PC-9 (cell line): ENCODE measurements at regions of chr1 and their contacts with region 1.

Region 1: GRCh38 chr1:51840743-51841461 is 37.6 kb downstream of the NRDC start:
- DNase-seq: peak in 1 of 2 experiments; percentile 3
- H3K4me3 ChIP-seq: no peak overlapping the region
- H3K27ac ChIP-seq: no peak overlapping the region
- H3K4me1 ChIP-seq: peaks cover 12% of the 10 kb centered on the region; the same call in 1 of the 2 replicates
- H3K27me3 ChIP-seq: no peaks in the 10 kb centered on the region
- CTCF ChIP-seq: no peak

Region 2: GRCh38 chr1:51100264-51100880 is 740.5 kb before region 1 on chr1:
- CTCF ChIA-PET with region 1: no interaction called
- POLR2A ChIA-PET with region 1: interaction called, 11 read pairs
- intact Hi-C with region 1: no loop called
- DNase-seq: no peak
- H3K4me3 ChIP-seq: no peak overlapping the region
- H3K27ac ChIP-seq: no peak overlapping the region
- H3K4me1 ChIP-seq: no peaks in the 10 kb centered on the region
- H3K27me3 ChIP-seq: no peaks in the 10 kb centered on the region
- CTCF ChIP-seq: no peak

Region 3: DNA sequence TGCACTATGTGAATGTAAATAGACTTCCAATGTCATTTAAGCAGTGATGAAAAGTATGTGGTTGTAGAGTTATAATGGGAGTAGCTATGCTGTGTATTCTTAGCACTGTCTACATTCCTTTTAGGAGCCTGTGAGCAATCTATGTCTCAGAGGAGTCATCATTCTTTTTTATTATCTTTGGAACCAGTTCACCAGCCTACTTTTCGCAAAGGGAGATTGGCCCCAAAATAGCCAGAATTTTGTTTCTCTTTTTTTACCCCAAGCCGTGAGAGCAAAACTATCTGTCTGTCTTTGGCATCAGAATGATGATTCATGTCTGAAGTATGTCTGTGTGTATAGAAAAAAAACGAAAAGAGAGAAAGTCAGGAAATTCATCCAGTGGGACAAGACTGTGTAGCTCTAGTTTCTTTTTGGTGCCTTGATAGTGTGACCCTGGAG is 179.8 kb before region 1 on chr1:
- CTCF ChIA-PET with region 1: no interaction called
- POLR2A ChIA-PET with region 1: no interaction called
- intact Hi-C with region 1: no loop called
- DNase-seq: peak; percentile 27 to 67
- H3K4me3 ChIP-seq: peak overlapping the region; percentile 19; the same call in 1 of the 2 replicates
- H3K27ac ChIP-seq: peak overlapping the region; percentile 57
- H3K4me1 ChIP-seq: peaks cover 32% of the 10 kb centered on the region
- H3K27me3 ChIP-seq: no peaks in the 10 kb centered on the region
- CTCF ChIP-seq: no peak

Region 4: DNA sequence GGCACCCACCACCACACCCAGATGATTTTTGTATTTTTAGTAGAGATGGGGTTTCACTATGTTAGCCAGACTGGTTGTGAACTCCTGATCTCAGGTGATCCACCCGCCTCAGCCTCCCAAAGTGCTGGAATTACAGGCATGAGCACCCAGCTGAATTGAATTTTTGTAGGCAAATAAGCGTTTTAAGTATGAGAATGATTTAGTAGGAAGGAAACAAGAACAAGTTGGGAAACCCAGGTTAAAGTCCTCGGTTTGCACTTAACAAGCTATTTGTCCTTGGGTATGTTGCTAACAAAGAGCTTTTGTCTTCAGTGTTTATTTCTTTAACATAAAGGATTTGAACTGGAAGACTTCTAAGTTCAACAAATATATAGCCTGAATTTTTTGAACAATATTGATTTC is 239.1 kb after region 1 on chr1:
- CTCF ChIA-PET with region 1: no interaction called
- POLR2A ChIA-PET with region 1: no interaction called
- intact Hi-C with region 1: no loop called
- DNase-seq: no peak
- H3K4me3 ChIP-seq: no peak overlapping the region
- H3K27ac ChIP-seq: no peak overlapping the region
- H3K4me1 ChIP-seq: no peaks in the 10 kb centered on the region
- H3K27me3 ChIP-seq: no peaks in the 10 kb centered on the region
- CTCF ChIP-seq: no peak